ENCODE measurements at regions of chr11 and their contacts with region 1.

Region 1: GRCh38 chr11:86291466-86292262 is 10.4 kb upstream of the HIKESHI start:
- ATAC-seq: peak in 4 of 8 experiments; percentile 30 to 62 (median 52)
- H3K4me3 ChIP-seq: no peak overlapping the region
- H3K27ac ChIP-seq: no peak overlapping the region
- H3K4me1 ChIP-seq: no peaks in the 10 kb centered on the region

Region 2: DNA sequence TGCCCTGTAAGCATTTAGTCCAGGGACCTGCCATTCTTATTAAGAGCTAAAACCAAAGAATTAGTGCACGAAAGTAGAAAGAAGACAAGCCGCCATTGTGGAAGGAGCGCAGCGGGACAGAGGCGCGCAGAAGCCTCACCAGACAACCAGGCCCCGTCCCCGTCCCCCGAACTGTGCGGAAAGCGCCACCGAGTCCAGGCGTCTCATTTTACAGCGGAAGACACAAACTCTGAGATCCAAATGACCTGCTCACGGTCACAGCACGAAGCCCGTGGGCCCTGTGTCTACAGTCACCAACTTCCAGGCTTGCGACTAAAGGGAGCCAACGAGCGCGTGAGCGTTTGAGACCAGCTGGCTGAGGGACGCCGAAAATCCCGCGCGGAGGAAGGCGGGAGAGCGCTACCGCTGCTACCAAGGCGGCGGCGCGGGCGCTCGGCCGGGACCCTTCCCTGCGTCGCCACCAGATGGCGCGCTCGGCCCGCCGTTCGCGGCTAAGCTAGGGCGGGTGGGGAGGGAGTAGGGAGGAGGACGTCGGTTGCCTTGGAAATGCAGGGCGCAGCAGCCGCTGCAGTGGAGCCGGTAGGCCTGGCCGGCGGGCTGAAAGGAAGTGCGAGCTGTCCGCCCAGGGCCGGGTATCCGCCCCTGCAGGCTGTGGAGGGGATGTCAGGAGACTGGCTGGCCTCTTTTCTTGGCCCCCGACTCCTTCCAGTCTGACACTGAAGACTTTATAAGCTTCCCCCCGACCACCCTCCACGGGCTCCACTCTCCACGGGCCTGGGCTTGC is 436.9 kb before region 1 on chr11:
- in situ Hi-C with region 1: loop called in 2 of 9 experiments (anchors 25 kb)
- ATAC-seq: peak; percentile 98 to 99 (median 98)
- H3K4me3 ChIP-seq: peak overlapping the region; percentile 35 to 44 (median 40)
- H3K27ac ChIP-seq: peak overlapping the region in 1 of 2 donors; percentile 35
- H3K4me1 ChIP-seq: peaks cover 2% of the 10 kb centered on the region in 2 donors

Region 3: GRCh38 chr11:86456052-86456939 is 164.6 kb after region 1 on chr11:
- in situ Hi-C with region 1: no loop called
- ATAC-seq: peak; percentile 80 to 97 (median 96)
- H3K4me3 ChIP-seq: no peak overlapping the region
- H3K27ac ChIP-seq: no peak overlapping the region
- H3K4me1 ChIP-seq: peaks cover 3 to 12% of the 10 kb centered on the region in 2 donors